H1 (cell line): ENCODE measurements at regions of chr5 and their contacts with region 1.

Region 1: GRCh38 chr5:115389799-115390382 is 93.4 kb upstream of the CCDC112 start:
- DNase-seq: peak; percentile 65 to 68
- H3K4me3 ChIP-seq: no peak overlapping the region
- H3K27ac ChIP-seq: no peak overlapping the region
- H3K4me1 ChIP-seq: no peaks in the 10 kb centered on the region
- H3K27me3 ChIP-seq: no peaks in the 10 kb centered on the region
- CTCF ChIP-seq: peak; percentile 76 to 92 (median 90)
- EP300 ChIP-seq: no peak
- POLR2A ChIP-seq: no peak
- RAD21 ChIP-seq: peak; percentile 78 to 87

Region 2: GRCh38 chr5:115377468-115378217 is 12.2 kb before region 1 on chr5:
- CTCF ChIA-PET with region 1: interaction called, 13 read pairs
- POLR2A ChIA-PET with region 1: interaction called, 3 read pairs
- DNase-seq: no peak
- H3K4me3 ChIP-seq: no peak overlapping the region
- H3K27ac ChIP-seq: no peak overlapping the region
- H3K4me1 ChIP-seq: no peaks in the 10 kb centered on the region; a peak in 1 of 7 replicates
- H3K27me3 ChIP-seq: no peaks in the 10 kb centered on the region
- CTCF ChIP-seq: no peak; a peak in 1 of 4 replicates
- EP300 ChIP-seq: no peak
- POLR2A ChIP-seq: no peak
- RAD21 ChIP-seq: peak in 1 of 2 experiments; percentile 41; a peak in 2 of 4 replicates

Region 3: GRCh38 chr5:115450741-115451140 is 60.9 kb after region 1 on chr5:
- CTCF ChIA-PET with region 1: no interaction called
- POLR2A ChIA-PET with region 1: no interaction called
- DNase-seq: no peak
- H3K4me3 ChIP-seq: no peak overlapping the region
- H3K27ac ChIP-seq: no peak overlapping the region
- H3K4me1 ChIP-seq: no peaks in the 10 kb centered on the region
- H3K27me3 ChIP-seq: no peaks in the 10 kb centered on the region
- CTCF ChIP-seq: no peak
- EP300 ChIP-seq: no peak
- POLR2A ChIP-seq: no peak
- RAD21 ChIP-seq: no peak